ENCODE measurements at regions of chr7 and their contacts with region 1.

Region 1: GRCh38 chr7:155190688-155191087 is 107.0 kb upstream of the INSIG1 start:
- DNase-seq: peak; percentile 69
- H3K4me3 Mint-ChIP-seq: no peak overlapping the region
- H3K27ac Mint-ChIP-seq: no peak overlapping the region
- H3K4me1 Mint-ChIP-seq: peaks cover 11% of the 10 kb centered on the region
- H3K27me3 Mint-ChIP-seq: peaks cover 13% of the 10 kb centered on the region

Region 2: GRCh38 chr7:155216293-155217272 is 25.9 kb after region 1 on chr7:
- CTCF ChIA-PET with region 1: no interaction called
- intact Hi-C with region 1: loop called (anchors 2 kb)
- DNase-seq: no peak
- H3K4me3 Mint-ChIP-seq: no peak overlapping the region
- H3K27ac Mint-ChIP-seq: no peak overlapping the region
- H3K4me1 Mint-ChIP-seq: peaks cover 5% of the 10 kb centered on the region
- H3K27me3 Mint-ChIP-seq: peaks cover 3% of the 10 kb centered on the region

Region 3: DNA sequence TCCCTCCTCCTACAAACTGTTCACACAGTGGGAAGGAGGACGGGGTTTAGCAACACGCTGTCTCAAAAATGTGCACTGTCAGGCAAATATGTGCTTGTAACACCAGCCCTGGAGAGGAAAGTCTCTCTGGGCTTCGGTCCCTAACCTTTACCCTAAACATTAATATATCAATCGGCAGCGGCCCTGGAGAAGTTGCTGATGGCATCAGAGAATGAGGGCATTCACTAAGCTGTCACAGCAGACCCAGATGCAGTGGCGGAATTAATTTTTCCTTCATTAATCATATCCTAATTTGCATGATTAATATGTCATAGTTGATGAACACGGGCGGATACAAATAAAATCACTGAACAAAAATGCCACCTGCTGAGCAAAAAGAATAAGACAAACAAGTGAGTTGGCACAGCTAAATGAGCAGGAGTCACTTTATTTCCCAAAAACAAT is 61.8 kb after region 1 on chr7:
- CTCF ChIA-PET with region 1: interaction called, 3 read pairs
- intact Hi-C with region 1: loop called (anchors 5 kb)
- DNase-seq: no peak
- H3K4me3 Mint-ChIP-seq: no peak overlapping the region
- H3K27ac Mint-ChIP-seq: no peak overlapping the region
- H3K4me1 Mint-ChIP-seq: peaks cover 5% of the 10 kb centered on the region
- H3K27me3 Mint-ChIP-seq: peaks cover 1% of the 10 kb centered on the region

Measured in activated naive CD4-positive, alpha-beta T cell treated with anti-CD3 and anti-CD28 coated beads for 36 hours (primary cell).